Ascending aorta (tissue), 2 donors: ENCODE measurements at regions of chr11 and their contacts with region 1.

Region 1: GRCh38 chr11:10564696-10565318 is 3.7 kb downstream of the LYVE1 start:
- DNase-seq: no peak
- H3K4me3 ChIP-seq: peak overlapping the region in 1 of 2 donors; percentile 10
- H3K27ac ChIP-seq: peak overlapping the region; percentile 78 to 82
- H3K4me1 ChIP-seq: peaks cover 0 to 28% of the 10 kb centered on the region in 2 donors
- H3K27me3 ChIP-seq: no peaks in the 10 kb centered on the region
- CTCF ChIP-seq: peak; percentile 44 to 60 (median 46)

Region 2: DNA sequence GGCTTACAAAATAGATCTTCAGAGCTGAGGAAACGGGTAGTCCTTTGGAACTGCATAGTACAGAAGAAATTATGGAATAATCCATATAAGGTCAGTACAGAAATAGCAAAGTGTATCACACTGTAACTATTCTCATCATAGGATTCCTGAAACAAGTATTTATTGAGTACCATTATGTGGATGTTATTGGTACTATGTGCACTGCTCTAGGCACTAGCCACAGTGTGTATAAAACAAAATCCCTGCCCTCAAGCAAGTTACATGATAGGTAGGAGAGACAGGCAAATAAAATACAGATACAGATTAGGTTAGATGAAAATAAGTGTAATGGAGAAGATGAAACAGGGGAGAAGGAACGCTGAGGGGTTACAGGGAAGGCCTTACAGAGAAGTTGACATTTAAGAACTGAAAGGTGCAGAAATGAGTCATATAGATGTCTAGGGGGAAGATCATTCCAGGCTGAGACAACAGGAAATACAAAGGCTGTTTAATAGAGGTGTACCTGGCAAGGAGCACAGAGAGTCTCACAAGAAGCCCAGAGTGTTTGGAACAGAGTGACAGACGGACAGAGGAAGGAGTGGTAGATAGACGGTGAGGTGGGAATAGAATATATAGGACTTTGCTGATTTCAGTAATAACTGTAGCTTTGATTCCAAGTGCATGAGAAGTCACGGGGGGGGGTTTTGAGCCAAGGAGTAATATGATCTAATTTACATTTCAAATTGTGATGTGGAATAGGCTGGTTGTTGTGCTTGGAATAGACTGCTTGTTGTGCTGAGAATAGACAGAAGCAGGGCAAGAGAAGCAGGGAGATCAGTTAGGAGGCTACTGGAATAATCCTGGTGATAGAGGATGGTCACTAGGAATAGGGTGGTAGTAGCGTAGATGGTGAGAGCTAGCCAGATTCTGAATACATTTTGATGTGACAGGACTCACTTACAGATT is 37.6 kb before region 1 on chr11:
- intact Hi-C with region 1: no loop called
- DNase-seq: no peak
- H3K4me3 ChIP-seq: no peak overlapping the region
- H3K27ac ChIP-seq: peak overlapping the region; percentile 62 to 80
- H3K4me1 ChIP-seq: peaks cover 10 to 33% of the 10 kb centered on the region in 2 donors
- H3K27me3 ChIP-seq: no peaks in the 10 kb centered on the region
- CTCF ChIP-seq: no peak

Region 3: GRCh38 chr11:10540923-10541560 is 23.8 kb before region 1 on chr11 and contains the start of gene RNF141:
- intact Hi-C with region 1: loop called (anchors 1 kb)
- DNase-seq: peak; percentile 79 to 97
- H3K4me3 ChIP-seq: peak within 1 kb of the TSS; percentile 63 to 88
- H3K27ac ChIP-seq: peak within 1 kb of the TSS; percentile 93 to 94
- H3K4me1 ChIP-seq: peaks cover 0 to 32% of the 10 kb centered on the region in 2 donors
- H3K27me3 ChIP-seq: no peaks in the 10 kb centered on the region
- CTCF ChIP-seq: peak; percentile 85 to 95 (median 91)
- total RNA-seq, gene RNF141: 10.9 TPM

Region 4: DNA sequence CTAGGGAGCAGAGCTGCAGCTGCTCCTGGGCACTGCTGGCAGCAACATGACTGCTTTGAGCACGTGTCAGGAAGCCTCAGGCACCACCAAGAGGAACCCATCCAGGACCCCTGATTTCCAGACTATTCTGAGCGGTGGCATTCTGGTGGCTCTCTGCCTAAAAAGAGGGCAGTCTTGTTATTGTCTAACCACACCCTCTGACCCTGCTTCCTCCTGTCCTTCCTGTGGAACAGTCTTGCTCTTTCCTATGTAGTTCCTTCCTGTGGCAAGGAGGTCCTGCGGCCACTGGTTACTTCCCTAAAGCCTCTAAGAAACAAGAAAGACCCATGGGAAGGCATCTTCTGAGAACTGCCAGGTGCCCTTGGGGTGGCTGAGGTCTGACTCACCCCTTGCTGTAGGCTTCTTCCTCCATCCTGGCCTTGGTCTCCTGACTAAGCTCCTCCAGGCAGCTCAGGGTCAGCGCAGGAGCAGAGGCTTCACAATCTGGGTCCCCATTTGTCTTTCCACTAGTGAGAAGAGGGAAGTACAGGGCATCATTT is 16.7 kb after region 1 on chr11:
- intact Hi-C with region 1: no loop called
- DNase-seq: peak; percentile 52 to 66
- H3K4me3 ChIP-seq: no peak overlapping the region
- H3K27ac ChIP-seq: peak overlapping the region; percentile 94
- H3K4me1 ChIP-seq: peaks cover 0 to 41% of the 10 kb centered on the region in 2 donors
- H3K27me3 ChIP-seq: no peaks in the 10 kb centered on the region
- CTCF ChIP-seq: no peak

Region 5: DNA sequence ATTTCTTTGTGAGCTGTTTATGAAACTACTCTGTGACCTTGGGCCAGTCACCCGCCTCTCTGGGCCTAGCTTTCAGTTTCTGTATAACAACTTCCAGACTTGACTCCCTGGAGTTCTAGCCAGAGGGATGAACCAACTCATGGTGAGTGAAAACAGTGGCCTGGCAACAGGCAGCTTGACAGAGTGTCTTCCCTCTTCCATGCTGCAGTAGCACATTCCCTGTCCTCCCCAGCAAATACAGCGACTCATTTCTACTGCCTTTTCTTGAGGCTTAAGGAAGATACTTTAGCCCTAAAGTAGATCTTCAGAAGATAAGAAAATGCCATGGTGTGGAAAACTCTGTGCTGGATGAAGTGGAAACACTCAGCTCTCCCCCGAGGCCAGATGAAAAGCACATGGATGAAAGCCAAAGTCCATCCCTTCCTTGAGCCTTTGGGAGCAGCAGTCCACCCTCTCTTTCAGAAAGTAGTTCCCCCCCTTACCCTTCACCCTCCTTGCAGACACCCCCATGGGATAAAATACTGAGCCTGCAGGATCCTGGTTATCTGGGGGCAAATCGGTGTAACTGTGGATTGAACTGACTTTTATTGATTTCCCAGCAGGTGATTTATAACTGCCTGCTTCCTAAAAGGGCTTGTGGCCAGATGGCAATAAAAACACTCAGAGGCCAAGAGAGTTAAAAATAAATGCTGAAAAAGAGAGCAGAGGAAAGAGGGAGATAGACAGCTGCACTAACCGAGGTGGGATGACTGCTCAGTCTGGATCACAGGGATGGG is 104.6 kb after region 1 on chr11:
- intact Hi-C with region 1: loop called (anchors 5 kb)
- DNase-seq: peak in 1 of 2 donors; percentile 65
- H3K4me3 ChIP-seq: peak overlapping the region in 1 of 2 donors; percentile 38
- H3K27ac ChIP-seq: peak overlapping the region; percentile 88 to 93
- H3K4me1 ChIP-seq: peaks cover 36 to 92% of the 10 kb centered on the region in 2 donors
- H3K27me3 ChIP-seq: no peaks in the 10 kb centered on the region
- CTCF ChIP-seq: no peak